Natural killer cell (primary cell): ENCODE measurements at regions of chrX and their contacts with region 1.

Region 1: DNA sequence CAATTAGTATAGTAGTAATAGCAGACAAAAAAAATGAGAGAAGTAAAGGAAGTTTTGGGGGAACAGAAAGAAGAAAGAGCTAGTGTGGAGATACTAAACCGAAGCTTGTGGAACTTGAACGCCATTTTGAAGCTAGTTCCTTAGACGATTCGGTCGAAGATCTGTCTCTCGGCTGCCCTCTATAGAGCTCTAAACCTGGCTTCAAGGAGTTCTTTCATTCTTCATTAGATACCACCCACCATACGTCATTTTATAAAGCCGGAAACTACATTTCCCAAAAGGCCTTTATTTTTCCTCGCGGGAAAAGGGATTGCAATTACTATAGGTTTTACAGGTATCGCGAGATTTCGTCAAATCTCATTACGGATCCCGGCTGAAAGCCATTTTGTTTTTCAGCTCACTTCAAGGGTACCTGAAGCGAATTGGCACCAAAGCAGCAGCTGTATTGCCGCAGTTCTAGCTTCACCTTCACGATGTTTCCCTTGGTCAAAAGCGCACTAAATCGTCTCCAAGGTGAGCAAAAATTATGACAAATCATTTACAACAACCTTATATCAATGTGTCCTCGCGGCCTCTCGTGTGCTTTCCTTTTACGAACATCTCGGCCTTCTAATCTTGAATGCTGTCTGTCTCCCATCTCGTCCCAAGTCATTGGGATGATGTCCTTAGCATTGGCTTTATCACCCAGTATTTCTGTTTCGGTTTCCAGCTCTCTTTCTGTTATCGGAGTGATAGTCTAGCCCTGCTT is at the start of gene COX7B:
- DNase-seq: peak; percentile 43 to 94
- ATAC-seq: peak; percentile 65 to 83 (median 66)
- H3K4me3 ChIP-seq: peak within 1 kb of the TSS; percentile 66
- H3K4me3 Mint-ChIP-seq: peak within 1 kb of the TSS; percentile 96
- H3K27ac ChIP-seq: peak within 1 kb of the TSS; percentile 92
- H3K27ac Mint-ChIP-seq: peak within 1 kb of the TSS; percentile 92 to 94
- H3K4me1 ChIP-seq: peaks cover 14% of the 10 kb centered on the region
- H3K4me1 Mint-ChIP-seq: peaks cover 15 to 33% of the 10 kb centered on the region in 2 donors
- H3K27me3 ChIP-seq: no peaks in the 10 kb centered on the region
- H3K27me3 Mint-ChIP-seq: no peaks in the 10 kb centered on the region
- CTCF ChIP-seq: peak; percentile 27
- total RNA-seq, gene COX7B: 133 to 168 (median 136) TPM

Region 2: DNA sequence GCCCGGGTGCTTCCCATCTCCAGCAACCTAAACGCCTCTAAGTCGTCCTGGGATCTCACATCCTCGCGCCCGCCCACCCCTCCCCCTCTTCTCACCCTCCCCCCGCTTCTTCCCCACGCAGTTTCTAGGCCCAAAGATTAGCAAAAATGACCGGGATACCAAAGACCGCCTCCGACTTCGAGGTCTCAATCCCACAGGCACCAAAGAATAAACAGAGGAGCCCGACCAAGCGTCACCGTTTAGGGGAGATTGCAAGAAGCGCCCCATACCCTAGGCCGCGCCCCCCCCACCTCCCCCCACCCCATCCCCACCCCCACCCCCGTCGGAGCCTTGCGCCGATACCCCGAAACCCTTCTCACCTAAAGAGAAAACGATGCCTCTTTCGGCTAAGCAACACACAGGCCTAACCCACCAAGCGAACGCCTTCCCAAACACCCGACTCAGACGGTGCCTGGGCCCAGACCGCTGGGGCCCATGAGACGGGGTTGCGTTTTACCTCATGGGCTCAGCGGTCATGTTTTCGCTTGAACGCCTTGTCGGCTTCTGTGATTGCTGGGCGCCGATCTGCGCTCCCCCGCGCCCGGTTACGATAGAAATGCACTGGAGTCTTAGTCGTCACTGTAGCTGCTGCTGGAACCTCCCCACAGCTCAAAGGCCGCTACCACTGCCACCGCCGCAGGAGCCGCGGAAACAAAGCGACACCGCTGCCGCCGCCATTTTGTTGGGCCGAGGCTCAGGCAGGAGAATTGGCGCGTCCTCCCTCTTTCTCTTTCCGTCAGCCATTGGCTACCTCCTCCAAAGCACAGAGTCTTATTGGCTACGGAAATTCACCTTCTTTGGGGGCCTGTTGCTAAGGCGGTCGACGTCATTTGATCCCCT is 113.5 kb before region 1 on chrX and contains the start of gene ATRX:
- intact Hi-C with region 1: loop called (anchors 2 kb)
- DNase-seq: peak; percentile 68 to 88
- ATAC-seq: peak; percentile 91 to 94 (median 92)
- H3K4me3 ChIP-seq: peak within 1 kb of the TSS; percentile 95
- H3K4me3 Mint-ChIP-seq: peak within 1 kb of the TSS; percentile 100
- H3K27ac ChIP-seq: peak within 1 kb of the TSS; percentile 99
- H3K27ac Mint-ChIP-seq: peak within 1 kb of the TSS; percentile 97 to 100
- H3K4me1 ChIP-seq: peaks cover 21% of the 10 kb centered on the region
- H3K4me1 Mint-ChIP-seq: peaks cover 29 to 37% of the 10 kb centered on the region in 2 donors
- H3K27me3 ChIP-seq: no peaks in the 10 kb centered on the region
- H3K27me3 Mint-ChIP-seq: no peaks in the 10 kb centered on the region
- CTCF ChIP-seq: no peak
- total RNA-seq, gene ATRX: 136 to 162 (median 159) TPM

Region 3: DNA sequence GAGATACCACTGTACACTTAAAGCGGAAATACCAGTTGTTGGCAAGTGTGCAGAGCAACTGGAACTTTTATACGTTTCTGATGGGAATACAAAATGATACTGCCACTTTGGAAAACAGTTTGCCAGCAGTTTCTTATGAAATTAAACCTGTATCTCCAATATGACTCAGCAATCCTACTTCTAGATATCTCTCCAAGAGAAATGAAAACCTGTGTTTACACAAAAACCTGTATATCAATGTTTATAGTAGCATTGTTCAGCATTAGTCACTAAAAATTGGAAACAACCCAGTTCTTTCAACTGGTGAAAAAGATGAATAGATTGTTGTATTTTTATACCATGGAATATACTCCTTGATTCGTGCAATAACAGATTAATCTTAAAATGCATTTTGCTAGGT is 38.0 kb after region 1 on chrX:
- intact Hi-C with region 1: no loop called
- DNase-seq: no peak
- ATAC-seq: no peak
- H3K4me3 ChIP-seq: no peak overlapping the region
- H3K4me3 Mint-ChIP-seq: no peak overlapping the region
- H3K27ac ChIP-seq: no peak overlapping the region
- H3K27ac Mint-ChIP-seq: no peak overlapping the region
- H3K4me1 ChIP-seq: no peaks in the 10 kb centered on the region
- H3K4me1 Mint-ChIP-seq: peaks cover 3 to 5% of the 10 kb centered on the region in 2 donors
- H3K27me3 ChIP-seq: no peaks in the 10 kb centered on the region
- H3K27me3 Mint-ChIP-seq: no peaks in the 10 kb centered on the region
- CTCF ChIP-seq: no peak

Region 4: GRCh38 chrX:78024349-78025108 is 125.3 kb after region 1 on chrX:
- intact Hi-C with region 1: loop called (anchors 1 kb)
- DNase-seq: peak in 1 of 2 donors; percentile 71
- ATAC-seq: peak; percentile 72 to 81 (median 74)
- H3K4me3 ChIP-seq: no peak overlapping the region
- H3K4me3 Mint-ChIP-seq: no peak overlapping the region
- H3K27ac ChIP-seq: no peak overlapping the region
- H3K27ac Mint-ChIP-seq: no peak overlapping the region
- H3K4me1 ChIP-seq: no peaks in the 10 kb centered on the region
- H3K4me1 Mint-ChIP-seq: peaks cover 0 to 6% of the 10 kb centered on the region in 2 donors
- H3K27me3 ChIP-seq: no peaks in the 10 kb centered on the region
- H3K27me3 Mint-ChIP-seq: no peaks in the 10 kb centered on the region
- CTCF ChIP-seq: peak; percentile 59

Region 5: GRCh38 chrX:78103623-78104446 is 204.6 kb after region 1 on chrX and contains the start of gene PGK1:
- intact Hi-C with region 1: loop called (anchors 1 kb)
- DNase-seq: peak; percentile 88 to 96
- ATAC-seq: peak; percentile 93 to 99 (median 93)
- H3K4me3 ChIP-seq: peak within 1 kb of the TSS; percentile 100
- H3K4me3 Mint-ChIP-seq: peak within 1 kb of the TSS; percentile 88
- H3K27ac ChIP-seq: peak within 1 kb of the TSS; percentile 98
- H3K27ac Mint-ChIP-seq: peak within 1 kb of the TSS; percentile 87 to 91
- H3K4me1 ChIP-seq: peaks cover 18% of the 10 kb centered on the region
- H3K4me1 Mint-ChIP-seq: peaks cover 31 to 39% of the 10 kb centered on the region in 2 donors
- H3K27me3 ChIP-seq: no peaks in the 10 kb centered on the region
- H3K27me3 Mint-ChIP-seq: no peaks in the 10 kb centered on the region
- CTCF ChIP-seq: no peak
- total RNA-seq, gene PGK1: 200 to 205 (median 203) TPM